Activated CD4-positive, alpha-beta T cell treated with anti-CD3 and anti-CD28 coated beads, Interleukin-2, amount 10 ng/mL, durations not matched to agents 24 days and 14 days (primary cell): ENCODE measurements at regions of chr6 and their contacts with region 1.

Region 1: GRCh38 chr6:26401987-26402658 is at the start of gene BTN3A1:
- DNase-seq: peak; percentile 91
- H3K4me3 Mint-ChIP-seq: peak within 1 kb of the TSS; percentile 96
- H3K27ac Mint-ChIP-seq: peak within 1 kb of the TSS; percentile 97
- H3K4me1 Mint-ChIP-seq: peaks cover 39% of the 10 kb centered on the region
- H3K27me3 Mint-ChIP-seq: no peaks in the 10 kb centered on the region
- total RNA-seq, gene BTN3A1: 29.6 and 33.2 TPM in 2 replicates

Region 2: DNA sequence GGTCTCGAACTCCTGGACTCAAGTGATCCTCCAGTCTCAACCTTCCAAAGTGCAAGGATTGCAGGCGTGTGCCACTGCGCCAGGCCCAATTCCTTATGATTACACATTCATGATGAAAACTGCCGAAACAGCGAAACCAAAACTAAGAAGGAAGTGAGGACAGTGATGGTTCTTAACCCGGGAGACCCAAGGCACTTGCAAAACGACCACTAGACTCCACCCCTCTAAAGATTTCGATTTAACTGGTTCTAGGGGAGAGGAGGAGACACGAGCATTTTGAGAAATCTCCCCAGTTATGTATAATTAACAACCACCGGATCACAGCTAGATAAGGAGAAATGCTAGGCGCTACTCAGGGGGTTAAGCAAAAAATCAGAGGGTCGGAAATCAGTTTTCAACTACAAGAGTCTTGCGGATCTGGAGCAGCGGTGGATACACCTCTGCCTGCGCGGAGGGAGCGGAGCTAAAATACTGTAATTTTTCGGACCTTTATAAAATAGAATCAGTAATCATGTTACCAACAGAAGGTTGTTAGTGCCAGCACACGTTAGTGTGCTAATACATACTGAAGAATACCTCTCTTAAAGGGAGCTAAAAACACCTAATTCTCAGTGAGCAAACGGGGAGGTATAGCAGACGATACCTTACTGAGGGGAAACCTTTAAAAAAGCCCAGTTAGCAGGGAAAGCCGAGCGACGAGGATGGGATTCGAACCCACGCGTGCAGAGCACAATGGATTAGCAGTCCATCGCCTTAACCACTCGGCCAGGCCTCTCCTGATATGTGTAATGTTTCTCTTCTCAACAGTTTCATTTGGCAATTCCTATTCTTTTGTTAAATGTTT is 97.1 kb before region 1 on chr6:
- intact Hi-C with region 1: no loop called
- DNase-seq: peak; percentile 84
- H3K4me3 Mint-ChIP-seq: peak overlapping the region; percentile 87
- H3K27ac Mint-ChIP-seq: peak overlapping the region; percentile 92
- H3K4me1 Mint-ChIP-seq: peaks cover 38% of the 10 kb centered on the region
- H3K27me3 Mint-ChIP-seq: peaks cover 1% of the 10 kb centered on the region

Region 3: GRCh38 chr6:26342106-26343004 is 59.8 kb before region 1 on chr6:
- intact Hi-C with region 1: loop called (anchors 1 kb)
- DNase-seq: peak; percentile 71
- H3K4me3 Mint-ChIP-seq: peak overlapping the region; percentile 92
- H3K27ac Mint-ChIP-seq: peak overlapping the region; percentile 84
- H3K4me1 Mint-ChIP-seq: peaks cover 16% of the 10 kb centered on the region
- H3K27me3 Mint-ChIP-seq: peaks cover 5% of the 10 kb centered on the region

Region 4: DNA sequence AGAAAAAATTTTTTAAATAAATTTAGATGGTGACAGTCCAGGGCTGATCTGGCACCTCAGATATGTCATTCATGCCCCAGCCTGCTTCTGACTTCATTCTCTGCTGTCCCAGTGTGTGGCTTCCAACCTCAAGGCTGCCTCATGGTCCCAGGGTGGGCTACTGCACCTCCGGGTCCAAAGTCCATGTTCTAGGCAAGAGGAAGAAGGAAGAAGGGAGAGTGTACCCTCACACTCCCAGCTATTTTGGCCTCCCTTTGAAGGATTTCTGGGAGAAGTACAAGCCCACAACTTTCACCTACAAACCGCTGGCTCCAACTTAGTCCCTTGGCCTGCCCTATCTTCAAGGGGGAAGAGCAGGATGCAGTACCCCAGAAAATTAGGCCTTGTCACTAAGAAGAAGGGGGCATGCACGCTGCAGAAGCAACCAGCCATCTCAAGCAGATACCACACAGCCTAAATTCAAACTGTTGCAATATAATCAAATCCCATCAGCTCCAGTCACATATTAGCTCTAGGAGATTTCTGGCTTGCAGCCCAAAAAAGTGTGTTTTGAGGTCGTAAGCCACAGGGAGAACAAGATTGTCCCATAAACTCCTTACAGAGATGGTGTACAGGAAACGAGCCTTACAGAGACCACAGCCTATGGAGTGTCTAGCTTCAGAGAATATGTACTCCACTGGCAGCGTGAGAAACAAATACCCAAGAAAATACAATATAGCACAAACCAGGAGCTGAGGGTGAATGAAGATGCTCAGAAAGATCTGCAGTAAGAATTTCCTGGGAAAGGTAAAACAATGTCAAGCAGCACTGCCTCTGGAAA is 38.0 kb before region 1 on chr6:
- intact Hi-C with region 1: loop called (anchors 2 kb)
- DNase-seq: peak; percentile 75
- H3K4me3 Mint-ChIP-seq: no peak overlapping the region
- H3K27ac Mint-ChIP-seq: no peak overlapping the region
- H3K4me1 Mint-ChIP-seq: peaks cover 41% of the 10 kb centered on the region
- H3K27me3 Mint-ChIP-seq: no peaks in the 10 kb centered on the region

Region 5: GRCh38 chr6:26383624-26384417 is 18.3 kb before region 1 on chr6:
- intact Hi-C with region 1: loop called (anchors 2 kb)
- DNase-seq: peak; percentile 73
- H3K4me3 Mint-ChIP-seq: peak overlapping the region; percentile 96
- H3K27ac Mint-ChIP-seq: peak overlapping the region; percentile 96
- H3K4me1 Mint-ChIP-seq: peaks cover 37% of the 10 kb centered on the region
- H3K27me3 Mint-ChIP-seq: no peaks in the 10 kb centered on the region

Region 6: DNA sequence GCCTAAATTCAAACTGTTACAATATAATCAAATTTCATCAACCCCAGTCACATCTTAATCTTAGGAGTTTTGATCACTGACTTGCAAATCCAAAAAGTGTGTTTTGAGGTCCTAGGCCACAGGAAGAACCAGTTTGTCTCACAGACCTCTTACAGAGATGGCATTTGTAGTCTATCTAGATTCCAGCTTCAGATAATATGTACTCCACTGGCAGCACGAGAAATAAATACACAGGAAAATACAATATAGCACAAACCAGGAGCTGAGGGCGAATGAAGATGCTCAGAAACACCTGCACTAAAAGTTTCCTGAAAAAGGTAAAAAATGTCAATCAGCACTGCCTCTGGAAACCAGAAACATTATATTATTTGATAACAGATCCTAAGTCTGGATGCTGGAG is 37.5 kb after region 1 on chr6:
- intact Hi-C with region 1: loop called (anchors 5 kb)
- DNase-seq: peak; percentile 61
- H3K4me3 Mint-ChIP-seq: peak overlapping the region; percentile 93
- H3K27ac Mint-ChIP-seq: peak overlapping the region; percentile 93
- H3K4me1 Mint-ChIP-seq: peaks cover 38% of the 10 kb centered on the region
- H3K27me3 Mint-ChIP-seq: no peaks in the 10 kb centered on the region

Region 7: DNA sequence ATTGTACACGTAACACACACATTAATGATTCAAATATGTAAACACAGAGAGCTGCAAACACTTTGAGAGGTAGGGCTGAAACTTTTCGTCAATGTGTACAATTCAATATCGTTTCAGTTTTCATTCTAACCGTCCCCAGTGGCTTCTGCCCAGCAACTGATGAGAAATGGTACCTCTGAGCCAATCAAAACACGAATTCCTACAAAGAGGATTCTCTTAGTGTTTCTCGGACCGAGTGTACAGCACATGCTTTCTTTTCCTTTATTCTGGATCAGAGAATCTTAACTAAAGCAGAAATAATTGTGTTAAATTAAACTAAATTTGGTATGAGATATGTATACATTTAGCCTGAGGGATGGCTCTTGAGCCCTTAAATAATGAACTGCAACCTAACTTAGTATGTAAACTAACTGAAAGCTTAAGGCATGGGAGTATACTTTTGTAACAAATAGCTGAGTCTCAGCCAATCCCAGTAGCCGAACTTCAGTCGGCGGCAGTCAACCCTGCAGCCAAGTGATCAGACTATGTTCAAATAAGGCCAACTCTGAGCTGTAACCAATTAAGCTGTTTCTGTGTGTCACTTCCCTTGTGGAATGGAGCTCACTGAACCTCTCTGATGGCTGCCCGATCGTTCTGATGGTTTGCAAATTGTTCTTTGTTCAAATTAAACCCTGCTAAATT is 71.8 kb after region 1 on chr6:
- intact Hi-C with region 1: loop called (anchors 2 kb)
- DNase-seq: peak; percentile 95
- H3K4me3 Mint-ChIP-seq: peak overlapping the region; percentile 96
- H3K27ac Mint-ChIP-seq: peak overlapping the region; percentile 100
- H3K4me1 Mint-ChIP-seq: peaks cover 30% of the 10 kb centered on the region
- H3K27me3 Mint-ChIP-seq: no peaks in the 10 kb centered on the region

Region 8: GRCh38 chr6:26532699-26533531 is 130.8 kb after region 1 on chr6:
- intact Hi-C with region 1: loop called (anchors 1 kb)
- DNase-seq: peak; percentile 97
- H3K4me3 Mint-ChIP-seq: peak overlapping the region; percentile 96
- H3K27ac Mint-ChIP-seq: peak overlapping the region; percentile 97
- H3K4me1 Mint-ChIP-seq: peaks cover 38% of the 10 kb centered on the region
- H3K27me3 Mint-ChIP-seq: peaks cover 2% of the 10 kb centered on the region